ENCODE measurements at regions of chr11 and their contacts with region 1.

Region 1: DNA sequence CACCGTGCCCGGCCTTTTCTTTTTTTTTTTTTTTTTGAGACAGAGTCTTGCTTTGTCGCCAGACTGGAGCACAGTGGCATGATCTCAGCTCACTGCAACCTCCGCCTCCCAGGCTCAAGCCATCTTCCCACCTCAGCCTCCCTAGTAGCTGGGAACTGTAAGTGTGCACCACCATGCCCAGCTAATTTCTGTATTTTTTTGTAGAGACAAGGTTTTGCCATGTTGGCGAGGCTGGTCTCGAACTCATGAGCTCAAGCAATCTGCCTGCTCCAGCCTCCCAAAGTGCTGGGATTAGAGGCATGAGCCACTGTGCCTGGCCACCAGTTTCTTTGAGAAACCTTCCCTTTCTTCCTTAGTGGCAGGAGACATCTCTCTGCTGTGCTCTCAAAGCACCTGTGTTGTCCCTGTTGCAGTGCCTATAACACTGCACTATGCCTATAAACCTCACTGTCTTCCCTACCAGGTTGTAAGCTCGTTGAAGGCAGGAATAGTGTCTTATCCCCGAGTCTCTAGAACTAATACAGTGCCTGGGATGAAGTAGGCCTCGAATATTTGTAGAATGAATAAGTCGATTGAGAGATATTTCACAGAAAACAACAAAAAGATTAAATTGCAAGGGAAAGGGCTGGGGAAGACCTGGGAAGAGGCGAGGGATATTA is 13.7 kb downstream of the TAGLN start:
- DNase-seq: no peak
- ATAC-seq: no peak
- H3K4me3 ChIP-seq: no peak overlapping the region
- H3K4me3 Mint-ChIP-seq: no peak overlapping the region
- H3K27ac ChIP-seq: no peak overlapping the region
- H3K27ac Mint-ChIP-seq: peak overlapping the region in 5 of 9 donors; percentile 0 to 77 (median 51)
- H3K4me1 ChIP-seq: no peaks in the 10 kb centered on the region
- H3K4me1 Mint-ChIP-seq: peaks cover 0 to 9% (median 3%) of the 10 kb centered on the region in 7 donors
- H3K27me3 ChIP-seq: no peaks in the 10 kb centered on the region
- H3K27me3 Mint-ChIP-seq: no peaks in the 10 kb centered on the region

Region 2: DNA sequence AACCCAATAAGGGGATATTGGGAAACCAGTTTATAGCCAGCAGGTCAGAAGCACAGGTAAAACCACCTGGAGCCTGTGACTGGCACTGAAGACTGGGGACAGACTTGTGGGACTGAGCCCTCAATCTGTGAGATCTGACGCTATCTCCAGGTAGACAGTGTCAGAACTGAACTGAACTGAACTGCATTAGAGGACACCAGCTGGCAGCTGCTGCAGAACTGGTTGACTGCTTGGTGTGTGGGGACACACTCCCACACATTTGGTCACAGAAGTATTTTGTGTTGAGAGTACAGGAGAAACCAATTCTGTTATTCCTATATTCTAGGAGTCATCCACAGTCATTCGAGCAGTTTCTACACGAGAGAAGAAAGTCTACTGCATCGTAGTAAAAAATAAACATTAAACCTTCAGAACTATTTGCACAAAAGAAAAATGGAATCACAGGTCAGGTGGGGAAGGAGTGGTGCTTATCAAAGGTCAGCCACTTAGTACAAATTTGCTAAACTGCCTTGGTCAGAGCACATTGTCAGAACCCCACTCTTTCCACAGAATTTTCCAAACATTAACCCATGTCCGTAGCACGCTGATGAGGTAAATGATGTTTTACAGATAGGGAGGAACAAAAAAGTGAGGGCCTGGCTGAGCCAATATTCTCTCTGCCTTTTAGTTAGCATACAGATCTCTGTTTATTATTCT is 191.8 kb before region 1 on chr11:
- CTCF ChIA-PET with region 1: no interaction called
- POLR2A ChIA-PET with region 1: no interaction called
- intact Hi-C with region 1: no loop called
- DNase-seq: no peak
- ATAC-seq: no peak
- H3K4me3 ChIP-seq: no peak overlapping the region
- H3K4me3 Mint-ChIP-seq: peak overlapping the region in 4 of 10 donors; percentile 23 to 52 (median 30)
- H3K27ac ChIP-seq: no peak overlapping the region
- H3K27ac Mint-ChIP-seq: peak overlapping the region in 6 of 9 donors; percentile 4 to 64 (median 34)
- H3K4me1 ChIP-seq: peaks cover 26 to 45% of the 10 kb centered on the region in 2 donors
- H3K4me1 Mint-ChIP-seq: peaks cover 53 to 76% (median 64%) of the 10 kb centered on the region in 7 donors
- H3K27me3 ChIP-seq: no peaks in the 10 kb centered on the region
- H3K27me3 Mint-ChIP-seq: no peaks in the 10 kb centered on the region

Region 3: DNA sequence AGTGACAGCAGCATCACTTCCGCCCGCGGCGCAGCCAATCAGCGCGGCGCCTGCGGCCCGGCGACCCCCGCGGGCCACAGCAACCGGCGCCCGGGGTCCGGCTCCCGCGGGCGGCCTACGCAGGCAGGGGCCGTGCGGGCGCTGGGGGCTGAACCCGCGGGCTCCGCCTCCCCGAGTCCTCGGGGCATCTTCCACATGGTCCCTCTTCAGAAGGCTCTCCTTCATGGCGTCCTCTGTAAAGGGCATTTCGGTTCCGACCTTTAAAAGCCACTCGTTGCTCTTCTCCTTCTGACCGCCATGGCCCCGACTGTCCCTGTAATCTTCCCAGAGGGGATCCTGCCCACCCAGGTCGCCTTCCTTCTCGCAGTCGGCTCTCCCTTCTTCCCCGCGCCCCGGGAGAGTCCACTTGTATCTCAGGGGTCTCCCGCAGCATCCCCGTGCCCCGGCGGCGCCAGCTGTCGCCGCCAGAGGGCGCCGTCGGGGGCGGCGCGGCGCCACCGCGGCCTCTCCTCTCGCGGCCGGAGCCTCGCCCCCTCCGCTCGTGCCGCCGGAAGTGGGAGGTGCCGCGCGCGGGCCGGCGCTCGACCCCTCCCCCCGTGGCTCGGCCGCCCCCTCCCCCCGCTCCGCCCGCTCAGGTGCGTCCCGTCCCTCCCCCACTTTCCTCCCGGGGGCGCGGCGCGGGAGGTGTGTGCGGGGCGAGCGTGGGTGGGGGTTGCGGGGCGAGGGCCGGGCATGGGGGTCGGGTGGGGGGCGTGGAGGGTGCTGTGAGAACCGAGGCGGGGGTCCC is 19.5 kb after region 1 on chr11 and contains the start of gene RNF214:
- CTCF ChIA-PET with region 1: interaction called, 4 read pairs
- POLR2A ChIA-PET with region 1: interaction called, 3 read pairs
- intact Hi-C with region 1: loop called in 1 of 2 experiments (anchors 2 kb)
- DNase-seq: peak; percentile 61 to 84 (median 73)
- ATAC-seq: peak; percentile 92
- H3K4me3 ChIP-seq: peak within 1 kb of the TSS; percentile 96
- H3K4me3 Mint-ChIP-seq: peak within 1 kb of the TSS; percentile 91 to 100 (median 98)
- H3K27ac ChIP-seq: peak within 1 kb of the TSS; percentile 97
- H3K27ac Mint-ChIP-seq: peak within 1 kb of the TSS; percentile 94 to 100 (median 99)
- H3K4me1 ChIP-seq: peaks cover 32 to 35% of the 10 kb centered on the region in 2 donors
- H3K4me1 Mint-ChIP-seq: peaks cover 40 to 55% (median 50%) of the 10 kb centered on the region in 7 donors
- H3K27me3 ChIP-seq: no peaks in the 10 kb centered on the region
- H3K27me3 Mint-ChIP-seq: no peaks in the 10 kb centered on the region
- total RNA-seq, gene RNF214: 16.6 to 36.0 (median 24.0) TPM